Head of caudate nucleus (tissue), 42 donors: ENCODE measurements at regions of chr6 and their contacts with region 1.

Region 1: DNA sequence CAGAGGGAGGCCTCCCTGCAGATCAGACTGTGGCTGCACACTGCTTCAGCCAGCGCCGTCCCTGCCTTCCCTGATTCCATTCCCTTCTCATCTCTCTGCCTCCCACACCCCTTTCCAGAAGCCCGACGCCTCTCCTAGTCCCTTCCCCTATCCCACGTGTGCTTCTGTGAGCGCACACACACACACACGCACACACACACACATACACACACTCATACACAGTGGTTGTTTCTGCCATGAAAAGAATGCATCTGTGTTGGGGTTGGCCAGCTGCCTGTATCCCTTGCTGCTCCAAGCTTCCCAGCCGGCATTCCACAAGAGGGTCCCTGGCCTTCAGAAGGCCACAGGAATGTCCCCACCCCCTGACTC is 51.7 kb downstream of the MOCS1 start:
- DNase-seq: peak in 16 of 42 donors; percentile 21 to 70 (median 38)

Region 2: DNA sequence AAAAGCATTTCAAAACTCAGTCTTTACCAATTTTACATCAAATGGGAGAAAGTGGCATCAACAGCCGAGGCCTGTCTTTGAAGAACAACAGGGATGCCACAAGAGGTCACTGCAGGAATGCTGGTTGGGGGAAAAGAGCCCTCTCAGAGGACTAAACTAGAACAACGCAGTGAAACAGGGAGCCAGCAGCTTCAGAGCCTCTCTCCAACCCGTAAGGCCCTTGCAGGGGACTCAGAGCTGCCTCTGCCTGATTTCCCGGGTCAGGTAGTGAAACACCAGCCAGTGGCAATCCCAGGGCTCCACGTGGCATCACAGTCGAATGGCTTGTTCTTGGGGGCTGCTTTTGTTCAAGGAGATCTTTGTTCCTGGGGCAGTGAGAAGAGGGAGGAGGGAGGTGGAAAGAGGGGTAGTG is 505.0 kb before region 1 on chr6:
- intact Hi-C with region 1: loop called (anchors 5 kb)
- DNase-seq: peak; percentile 48 to 93 (median 82)

Region 3: DNA sequence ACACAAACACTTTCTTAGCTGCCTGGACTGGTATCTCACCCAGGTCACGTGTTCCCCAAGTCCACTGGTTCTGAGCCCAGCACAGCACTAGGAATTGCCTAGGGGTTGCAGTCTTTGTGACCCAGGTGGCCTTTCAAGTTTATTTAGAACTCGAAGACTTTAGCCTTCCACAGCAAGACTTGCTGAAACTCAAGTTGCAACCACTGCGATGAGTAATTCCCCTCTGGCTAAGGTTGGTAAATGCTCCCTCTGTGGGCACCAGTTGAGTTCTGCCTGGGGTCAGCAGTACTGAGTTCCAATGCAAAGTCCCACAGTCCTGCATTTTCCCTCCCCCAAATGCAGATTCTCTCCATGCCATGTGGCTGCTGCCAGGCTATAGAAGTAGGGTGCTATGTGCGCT is 129.3 kb after region 1 on chr6:
- intact Hi-C with region 1: no loop called
- DNase-seq: no peak